Dorsolateral prefrontal cortex (tissue), 120 donors: ENCODE measurements at regions of chr4 and their contacts with region 1.

Region 1: GRCh38 chr4:95549246-95550114 is 707 bp upstream of the UNC5C start:
- DNase-seq: peak; percentile 27 to 88 (median 80)
- H3K4me3 ChIP-seq: peak overlapping the region; percentile 57 to 94 (median 84)
- H3K27ac ChIP-seq: peak overlapping the region; percentile 94 to 100 (median 99)
- H3K27me3 ChIP-seq: no peaks in the 10 kb centered on the region
- CTCF ChIP-seq: peak in 11 of 56 donors; percentile 1 to 34 (median 13)

Region 2: DNA sequence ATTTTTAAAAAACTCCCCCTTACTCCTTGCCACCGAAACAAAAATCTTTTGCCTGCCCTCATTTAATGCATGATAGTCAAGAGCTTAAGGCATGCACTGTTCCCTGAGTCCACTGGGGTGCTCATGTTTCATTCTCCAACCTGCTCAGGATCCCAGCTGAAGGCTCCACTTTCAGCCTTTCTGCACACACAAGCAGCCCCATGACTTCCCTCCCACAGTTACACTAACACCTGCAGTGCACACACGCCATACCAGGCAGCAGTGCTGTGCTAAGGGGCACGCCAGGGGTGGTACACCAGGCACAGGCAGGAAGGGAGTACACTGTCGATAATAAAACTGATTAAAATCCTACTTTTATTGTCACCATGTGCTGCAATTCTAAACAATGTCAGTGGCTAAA is 406.5 kb before region 1 on chr4:
- intact Hi-C with region 1: no loop called
- DNase-seq: no peak
- H3K4me3 ChIP-seq: no peak overlapping the region
- H3K27ac ChIP-seq: no peak overlapping the region
- H3K27me3 ChIP-seq: no peaks in the 10 kb centered on the region
- CTCF ChIP-seq: no peak

Region 3: DNA sequence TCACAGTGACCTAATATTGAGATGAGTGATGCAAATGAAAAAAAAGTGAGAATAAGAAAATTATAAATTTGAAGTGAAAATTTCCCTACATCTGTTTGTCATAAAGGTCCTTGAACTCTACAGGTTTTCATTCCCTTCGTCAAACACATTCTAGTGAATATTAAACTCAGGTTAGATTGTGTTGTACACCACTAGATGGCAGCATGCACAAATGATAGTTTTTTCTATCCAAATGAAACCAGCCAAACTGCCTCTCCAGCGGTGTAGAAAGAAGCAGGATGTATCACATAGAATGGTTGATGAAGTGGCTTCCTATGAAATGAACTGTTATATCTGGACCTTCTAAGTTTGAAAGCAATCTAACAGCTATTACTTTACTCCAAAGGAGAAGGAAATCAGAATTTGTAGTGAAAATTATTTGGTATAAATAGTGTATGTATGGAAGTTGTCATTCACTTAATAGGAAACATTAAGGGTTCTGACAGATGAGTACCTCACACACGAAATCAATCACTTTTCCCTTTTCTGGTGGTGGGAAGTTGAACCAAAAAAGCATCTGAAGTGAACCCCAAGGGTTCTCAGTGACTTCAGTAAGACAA is 383.5 kb before region 1 on chr4:
- intact Hi-C with region 1: loop called (anchors 2 to 5 kb)
- DNase-seq: peak in 2 of 10 donors; percentile 14 to 58
- H3K4me3 ChIP-seq: no peak overlapping the region
- H3K27ac ChIP-seq: peak overlapping the region in 57 of 59 donors; percentile 11 to 99 (median 92)
- H3K27me3 ChIP-seq: no peaks in the 10 kb centered on the region
- CTCF ChIP-seq: peak; percentile 72 to 94 (median 83)

Region 4: GRCh38 chr4:95304898-95305297 is 244.6 kb before region 1 on chr4:
- intact Hi-C with region 1: loop called in 1 of 2 experiments (anchors 10 kb)
- DNase-seq: peak in 1 of 10 donors; percentile 56
- H3K4me3 ChIP-seq: peak overlapping the region in 2 of 59 donors; percentile 2 to 5
- H3K27ac ChIP-seq: peak overlapping the region in 58 of 59 donors; percentile 51 to 95 (median 87)
- H3K27me3 ChIP-seq: no peaks in the 10 kb centered on the region
- CTCF ChIP-seq: peak in 2 of 56 donors; percentile 5 to 16

Region 5: GRCh38 chr4:95415346-95415771 is 134.1 kb before region 1 on chr4:
- intact Hi-C with region 1: loop called in 1 of 2 experiments (anchors 10 kb)
- DNase-seq: no peak
- H3K4me3 ChIP-seq: no peak overlapping the region
- H3K27ac ChIP-seq: peak overlapping the region in 33 of 59 donors; percentile 9 to 97 (median 92)
- H3K27me3 ChIP-seq: no peaks in the 10 kb centered on the region
- CTCF ChIP-seq: no peak

Region 6: DNA sequence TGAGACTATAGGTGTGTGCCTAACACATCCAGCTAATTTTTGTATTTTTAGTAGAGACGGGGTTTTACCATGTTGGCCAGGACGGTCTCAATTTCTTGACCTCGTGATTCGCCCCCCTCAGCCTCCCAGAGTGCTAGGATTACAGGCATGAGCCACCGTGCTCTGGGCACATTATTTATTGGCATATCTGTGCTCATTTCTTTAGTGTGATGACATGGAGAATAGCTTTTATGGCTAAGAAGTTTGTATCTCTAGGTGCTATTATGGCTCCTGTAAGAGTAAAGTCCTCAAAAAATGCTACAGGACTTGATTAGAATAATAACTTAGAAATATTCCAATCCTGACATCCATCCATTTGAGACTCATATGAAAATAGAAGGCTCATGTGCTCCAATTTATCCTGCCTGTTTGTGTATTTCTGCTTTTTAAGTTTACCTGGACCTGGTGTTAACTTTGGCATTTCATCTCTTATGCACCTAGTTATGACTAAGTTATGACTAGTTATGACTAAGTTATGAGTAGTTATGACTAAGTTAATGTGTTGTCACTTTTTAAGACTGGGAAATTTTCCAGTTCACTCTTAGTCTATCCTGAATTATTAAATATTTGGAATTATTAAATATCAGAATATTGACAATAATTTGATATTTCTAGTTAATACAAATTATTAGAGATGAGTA is 35.7 kb after region 1 on chr4:
- intact Hi-C with region 1: no loop called
- DNase-seq: no peak
- H3K4me3 ChIP-seq: no peak overlapping the region
- H3K27ac ChIP-seq: no peak overlapping the region
- H3K27me3 ChIP-seq: no peaks in the 10 kb centered on the region
- CTCF ChIP-seq: no peak

Region 7: GRCh38 chr4:95742872-95743271 is 193.4 kb after region 1 on chr4:
- intact Hi-C with region 1: loop called in 1 of 2 experiments (anchors 10 kb)
- DNase-seq: no peak
- H3K4me3 ChIP-seq: peak overlapping the region in 1 of 59 donors; percentile 34
- H3K27ac ChIP-seq: peak overlapping the region; percentile 77 to 99 (median 95)
- H3K27me3 ChIP-seq: no peaks in the 10 kb centered on the region
- CTCF ChIP-seq: no peak

Region 8: GRCh38 chr4:96035727-96036126 is 486.2 kb after region 1 on chr4:
- intact Hi-C with region 1: loop called in 1 of 2 experiments (anchors 5 kb)
- DNase-seq: no peak
- H3K4me3 ChIP-seq: no peak overlapping the region
- H3K27ac ChIP-seq: no peak overlapping the region
- H3K27me3 ChIP-seq: no peaks in the 10 kb centered on the region
- CTCF ChIP-seq: peak; percentile 31 to 83 (median 58)